H1 (cell line): ENCODE measurements at regions of chr9 and their contacts with region 1.

Region 1: GRCh38 chr9:112361601-112362000 is 18.3 kb upstream of the HSDL2 start:
- DNase-seq: no peak
- H3K4me3 ChIP-seq: no peak overlapping the region
- H3K27ac ChIP-seq: no peak overlapping the region
- H3K4me1 ChIP-seq: no peaks in the 10 kb centered on the region
- H3K27me3 ChIP-seq: no peaks in the 10 kb centered on the region
- CTCF ChIP-seq: peak in 1 of 3 experiments; percentile 34; a peak in 1 of 4 replicates
- EP300 ChIP-seq: no peak
- POLR2A ChIP-seq: no peak
- RAD21 ChIP-seq: peak; percentile 55 to 61

Region 2: GRCh38 chr9:112086627-112087026 is 275.0 kb before region 1 on chr9:
- CTCF ChIA-PET with region 1: interaction called, 30 read pairs
- POLR2A ChIA-PET with region 1: interaction called, 3 read pairs
- DNase-seq: no peak
- H3K4me3 ChIP-seq: no peak overlapping the region
- H3K27ac ChIP-seq: no peak overlapping the region
- H3K4me1 ChIP-seq: no peaks in the 10 kb centered on the region; a peak in 1 of 7 replicates
- H3K27me3 ChIP-seq: no peaks in the 10 kb centered on the region
- CTCF ChIP-seq: peak in 2 of 3 experiments; percentile 48 to 56; a peak in 2 of 4 replicates
- EP300 ChIP-seq: no peak
- POLR2A ChIP-seq: no peak
- RAD21 ChIP-seq: peak; percentile 75 to 77

Region 3: GRCh38 chr9:112097712-112098688 is 263.6 kb before region 1 on chr9:
- CTCF ChIA-PET with region 1: interaction called, 36 read pairs
- POLR2A ChIA-PET with region 1: no interaction called
- DNase-seq: peak; percentile 72 to 81
- H3K4me3 ChIP-seq: peak overlapping the region in 1 of 4 experiments; percentile 27; a peak in 2 of 8 replicates
- H3K27ac ChIP-seq: peak overlapping the region; percentile 16; the same call in 1 of the 2 replicates
- H3K4me1 ChIP-seq: peaks cover 3 to 13% (median 5%) of the 10 kb centered on the region in 4 experiments; a peak in 6 of 7 replicates
- H3K27me3 ChIP-seq: no peaks in the 10 kb centered on the region
- CTCF ChIP-seq: peak; percentile 36 to 86 (median 79)
- EP300 ChIP-seq: no peak
- POLR2A ChIP-seq: no peak
- RAD21 ChIP-seq: peak; percentile 75 to 86

Region 4: GRCh38 chr9:112119225-112120029 is 242.2 kb before region 1 on chr9:
- CTCF ChIA-PET with region 1: interaction called, 69 read pairs
- POLR2A ChIA-PET with region 1: interaction called, 3 read pairs
- DNase-seq: peak in 1 of 2 experiments; percentile 22
- H3K4me3 ChIP-seq: no peak overlapping the region
- H3K27ac ChIP-seq: no peak overlapping the region
- H3K4me1 ChIP-seq: peaks cover 0 to 11% (median 2%) of the 10 kb centered on the region in 4 experiments; a peak in 2 of 7 replicates
- H3K27me3 ChIP-seq: no peaks in the 10 kb centered on the region
- CTCF ChIP-seq: no peak
- EP300 ChIP-seq: no peak
- POLR2A ChIP-seq: no peak
- RAD21 ChIP-seq: no peak

Region 5: DNA sequence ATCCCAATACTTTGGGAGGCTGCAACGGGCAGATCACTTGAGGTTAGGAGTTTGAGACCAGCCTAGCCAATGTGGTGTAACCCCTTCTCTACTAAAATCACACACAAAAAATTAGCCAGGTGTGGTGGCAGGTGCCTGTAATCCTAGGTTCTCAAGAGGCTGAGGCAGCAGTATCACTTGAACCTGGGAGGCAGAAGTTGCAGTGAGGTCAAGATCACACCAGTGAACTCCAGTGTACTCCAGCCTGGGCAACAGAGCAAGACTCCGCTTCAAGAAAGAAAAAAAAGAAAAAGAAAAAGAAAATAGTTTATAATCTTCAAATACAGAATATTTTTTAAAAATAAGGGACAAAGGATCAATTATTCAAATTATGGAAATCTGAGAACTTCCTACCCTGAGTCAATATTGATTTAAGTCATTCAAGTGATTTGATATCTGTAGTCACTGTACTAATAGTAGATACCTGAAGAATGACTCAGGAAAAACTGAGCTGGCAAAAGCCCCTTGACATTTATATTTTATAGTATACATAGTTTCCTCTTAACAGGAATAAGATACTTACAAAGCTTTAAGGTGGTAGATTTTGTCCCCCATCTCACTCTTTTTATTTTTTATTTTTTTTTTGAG is 90.0 kb before region 1 on chr9:
- CTCF ChIA-PET with region 1: no interaction called
- POLR2A ChIA-PET with region 1: no interaction called
- DNase-seq: no peak
- H3K4me3 ChIP-seq: no peak overlapping the region
- H3K27ac ChIP-seq: no peak overlapping the region
- H3K4me1 ChIP-seq: no peaks in the 10 kb centered on the region; a peak in 1 of 7 replicates
- H3K27me3 ChIP-seq: no peaks in the 10 kb centered on the region
- CTCF ChIP-seq: no peak
- EP300 ChIP-seq: no peak
- POLR2A ChIP-seq: no peak
- RAD21 ChIP-seq: no peak

Region 6: DNA sequence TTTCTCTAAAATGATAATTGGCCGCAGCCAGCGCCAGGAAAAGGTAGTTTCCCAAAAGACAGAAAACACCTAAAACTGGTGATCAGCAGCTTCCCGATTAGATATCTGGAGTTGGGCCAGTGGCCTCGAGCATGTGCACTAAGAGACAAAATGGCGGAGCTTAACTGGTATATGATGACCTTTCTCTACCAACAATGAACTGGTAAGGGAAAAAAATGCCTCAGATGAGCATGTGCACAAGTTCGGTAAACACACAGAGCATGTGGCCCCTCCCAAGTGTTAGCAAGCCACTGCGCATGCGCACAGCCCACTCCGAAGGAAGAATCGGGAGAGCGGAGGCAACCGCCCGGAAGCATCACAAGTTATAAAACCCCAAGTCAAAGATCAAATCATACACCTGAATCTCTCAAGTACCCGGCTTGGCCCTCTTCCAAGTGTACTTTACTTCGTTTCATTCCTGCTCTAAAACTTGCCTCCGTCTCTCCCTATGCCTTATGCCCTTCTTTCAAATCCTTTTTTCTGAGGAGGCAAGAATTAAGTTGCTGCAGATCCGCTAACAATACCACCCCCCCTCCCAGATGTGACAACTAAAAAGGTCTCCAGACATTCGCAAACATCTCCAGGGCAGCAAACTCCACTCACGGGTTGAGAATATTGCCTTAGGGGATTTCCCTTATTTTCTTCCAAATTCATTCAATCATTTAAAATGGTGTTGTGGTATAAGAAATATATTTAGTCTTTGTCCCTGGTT is 13.2 kb before region 1 on chr9:
- CTCF ChIA-PET with region 1: interaction called, 33 read pairs
- POLR2A ChIA-PET with region 1: no interaction called
- DNase-seq: peak in 1 of 2 experiments; percentile 51
- H3K4me3 ChIP-seq: peak overlapping the region in 3 of 4 experiments; percentile 15 to 25 (median 17); a peak in 2 of 8 replicates
- H3K27ac ChIP-seq: no peak overlapping the region
- H3K4me1 ChIP-seq: peaks cover 5 to 11% (median 8%) of the 10 kb centered on the region in 4 experiments; a peak in 6 of 7 replicates
- H3K27me3 ChIP-seq: no peaks in the 10 kb centered on the region; a peak in 1 of 7 replicates
- CTCF ChIP-seq: no peak
- EP300 ChIP-seq: no peak
- POLR2A ChIP-seq: no peak
- RAD21 ChIP-seq: no peak

Region 7: GRCh38 chr9:112379177-112380101 is 17.8 kb after region 1 on chr9:
- CTCF ChIA-PET with region 1: interaction called, 22 read pairs
- POLR2A ChIA-PET with region 1: interaction called, 15 read pairs
- DNase-seq: peak; percentile 96 to 100
- H3K4me3 ChIP-seq: peak overlapping the region; percentile 88 to 93 (median 90)
- H3K27ac ChIP-seq: peak overlapping the region; percentile 86
- H3K4me1 ChIP-seq: no peaks in the 10 kb centered on the region; a peak in 3 of 7 replicates
- H3K27me3 ChIP-seq: no peaks in the 10 kb centered on the region
- CTCF ChIP-seq: peak in 1 of 3 experiments; percentile 1; a peak in 1 of 4 replicates
- EP300 ChIP-seq: no peak
- POLR2A ChIP-seq: peak; percentile 79 to 89
- RAD21 ChIP-seq: no peak; a peak in 1 of 4 replicates

Region 8: DNA sequence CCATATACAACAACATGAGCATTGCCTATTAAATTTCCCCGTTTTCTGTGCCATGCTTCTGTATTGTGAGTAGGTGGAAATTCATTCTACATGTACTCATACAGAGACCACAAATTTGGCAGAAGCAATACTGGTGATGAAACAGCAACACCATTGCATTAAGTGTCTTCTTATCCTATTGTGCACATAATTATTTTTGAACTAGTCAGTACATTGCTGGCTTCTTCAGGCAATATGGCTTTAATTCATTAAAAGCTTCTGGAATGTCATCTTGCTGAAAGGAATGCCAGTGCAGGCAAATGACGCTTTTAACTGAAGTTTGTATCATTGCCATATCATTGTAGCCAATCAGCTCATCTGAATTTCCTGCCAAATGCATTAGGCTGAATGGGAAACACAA is 207.6 kb after region 1 on chr9:
- CTCF ChIA-PET with region 1: no interaction called
- POLR2A ChIA-PET with region 1: no interaction called
- DNase-seq: no peak
- H3K4me3 ChIP-seq: no peak overlapping the region
- H3K27ac ChIP-seq: no peak overlapping the region
- H3K4me1 ChIP-seq: peaks cover 0 to 3% (median 0%) of the 10 kb centered on the region in 4 experiments; a peak in 1 of 7 replicates
- H3K27me3 ChIP-seq: no peaks in the 10 kb centered on the region
- CTCF ChIP-seq: no peak
- EP300 ChIP-seq: no peak
- POLR2A ChIP-seq: no peak
- RAD21 ChIP-seq: no peak